Activated CD4-positive, alpha-beta memory T cell treated with anti-CD3 and anti-CD28 coated beads for 36 hours (primary cell): ENCODE measurements at regions of chr2 and their contacts with region 1.

Region 1: DNA sequence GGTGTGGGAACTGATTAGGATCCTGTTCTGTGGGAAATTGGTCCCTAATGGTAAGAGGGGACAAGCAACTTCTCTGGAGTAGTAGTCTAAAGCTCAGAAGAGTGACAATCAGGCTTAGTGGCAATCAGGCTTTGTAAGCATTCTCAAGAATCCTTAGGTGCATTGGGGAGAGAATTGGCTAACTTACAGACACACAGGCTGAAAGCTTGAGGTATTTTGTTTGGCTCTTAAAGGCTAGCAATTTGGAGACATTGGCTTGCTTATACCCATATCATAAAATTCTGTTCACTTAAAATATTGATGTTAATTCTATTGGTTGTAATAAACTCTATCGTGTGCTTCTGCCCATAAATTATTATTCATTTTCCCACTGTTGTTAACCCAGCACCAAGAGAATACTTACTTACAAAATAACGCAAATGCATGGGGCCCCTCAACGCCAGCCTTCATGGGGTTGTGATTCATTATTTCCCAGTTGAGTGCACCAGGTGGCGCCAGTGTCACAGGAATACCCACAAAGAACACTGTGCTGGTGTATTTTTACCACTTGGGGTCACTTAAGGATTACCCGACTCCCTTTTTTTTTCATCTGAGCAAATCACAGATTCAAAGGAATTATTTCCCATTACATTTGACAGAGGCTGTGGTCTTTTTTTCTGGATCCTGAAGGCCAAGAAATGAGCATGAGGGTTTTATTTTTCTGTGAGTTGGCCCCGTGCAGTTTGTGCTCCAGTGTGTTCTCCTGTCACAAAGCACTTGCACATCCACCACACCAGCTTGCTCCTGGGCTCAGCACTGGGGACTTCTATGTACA is 45.5 kb downstream of the DDX1 start:
- DNase-seq: peak; percentile 69
- H3K4me3 Mint-ChIP-seq: no peak overlapping the region
- H3K27ac Mint-ChIP-seq: no peak overlapping the region
- H3K4me1 Mint-ChIP-seq: no peaks in the 10 kb centered on the region
- H3K27me3 Mint-ChIP-seq: no peaks in the 10 kb centered on the region

Region 2: DNA sequence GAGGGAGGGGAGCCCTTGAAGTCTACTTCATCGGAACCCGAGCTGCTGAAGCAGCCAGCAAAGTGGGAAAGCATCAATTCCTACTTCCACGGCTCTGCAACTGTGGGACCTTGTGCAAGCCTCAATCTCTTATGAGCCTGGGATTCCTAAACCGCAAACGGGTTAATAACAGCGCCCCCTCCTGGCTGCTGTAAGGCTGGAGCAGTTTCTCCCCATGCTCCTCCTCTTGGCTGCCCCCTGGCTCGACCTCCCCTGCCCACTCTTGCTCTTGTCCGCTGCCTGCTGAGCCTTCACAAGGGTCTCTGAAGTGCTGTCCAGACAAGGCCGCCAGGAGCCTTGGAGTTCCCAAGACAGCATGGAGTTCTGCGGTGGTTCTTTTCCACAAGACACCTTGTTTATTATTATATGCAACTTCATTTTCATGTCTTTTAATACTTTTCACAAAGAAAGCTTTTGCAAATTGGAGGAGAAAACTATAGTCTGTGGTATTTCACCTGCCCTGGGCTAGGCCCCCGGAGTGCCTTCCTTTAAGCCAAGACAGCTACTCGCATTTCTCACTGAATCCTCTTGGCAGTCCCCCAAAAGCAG is 111.7 kb after region 1 on chr2:
- CTCF ChIA-PET with region 1: no interaction called
- POLR2A ChIA-PET with region 1: no interaction called
- intact Hi-C with region 1: loop called (anchors 2 kb)
- DNase-seq: peak; percentile 17
- H3K4me3 Mint-ChIP-seq: no peak overlapping the region
- H3K27ac Mint-ChIP-seq: no peak overlapping the region
- H3K4me1 Mint-ChIP-seq: no peaks in the 10 kb centered on the region
- H3K27me3 Mint-ChIP-seq: peaks cover 4% of the 10 kb centered on the region

Region 3: GRCh38 chr2:16038621-16039020 is 401.4 kb after region 1 on chr2:
- CTCF ChIA-PET with region 1: no interaction called
- POLR2A ChIA-PET with region 1: no interaction called
- intact Hi-C with region 1: no loop called
- DNase-seq: no peak
- H3K4me3 Mint-ChIP-seq: no peak overlapping the region
- H3K27ac Mint-ChIP-seq: no peak overlapping the region
- H3K4me1 Mint-ChIP-seq: no peaks in the 10 kb centered on the region
- H3K27me3 Mint-ChIP-seq: peaks cover 8% of the 10 kb centered on the region

Region 4: GRCh38 chr2:16239296-16239850 is 602.2 kb after region 1 on chr2:
- CTCF ChIA-PET with region 1: no interaction called
- POLR2A ChIA-PET with region 1: no interaction called
- intact Hi-C with region 1: loop called (anchors 5 kb)
- DNase-seq: no peak
- H3K4me3 Mint-ChIP-seq: no peak overlapping the region
- H3K27ac Mint-ChIP-seq: no peak overlapping the region
- H3K4me1 Mint-ChIP-seq: no peaks in the 10 kb centered on the region
- H3K27me3 Mint-ChIP-seq: peaks cover 5% of the 10 kb centered on the region

Region 5: GRCh38 chr2:16756831-16757644 is 1119.9 kb after region 1 on chr2:
- CTCF ChIA-PET with region 1: interaction called, 3 read pairs
- POLR2A ChIA-PET with region 1: no interaction called
- intact Hi-C with region 1: loop called (anchors 5 kb)
- DNase-seq: peak; percentile 75
- H3K4me3 Mint-ChIP-seq: no peak overlapping the region
- H3K27ac Mint-ChIP-seq: no peak overlapping the region
- H3K4me1 Mint-ChIP-seq: no peaks in the 10 kb centered on the region
- H3K27me3 Mint-ChIP-seq: no peaks in the 10 kb centered on the region